Posterior vena cava (tissue), 2 donors: ENCODE measurements at regions of chr20 and their contacts with region 1.

Region 1: DNA sequence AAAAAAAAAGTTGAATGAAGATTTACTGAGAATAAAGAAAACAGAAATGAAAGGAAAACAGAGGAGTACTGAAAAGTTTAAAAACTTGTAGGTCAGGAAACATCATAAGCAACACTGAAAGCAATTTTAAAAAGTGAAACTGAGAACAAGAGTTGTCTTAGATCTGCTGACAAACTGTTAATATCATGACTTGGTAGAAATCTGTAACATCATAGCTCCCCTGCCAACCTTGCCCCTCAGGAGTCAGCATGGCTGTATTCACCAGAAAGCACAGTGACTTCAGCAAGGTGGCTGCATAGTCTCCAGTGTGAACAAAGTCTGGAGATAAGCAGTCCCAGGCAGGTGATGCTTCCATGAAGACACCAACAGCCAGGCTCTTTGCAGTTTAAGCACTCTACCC is 5.3 kb downstream of the NAA20 start:
- DNase-seq: no peak

Region 2: GRCh38 chr20:19223652-19224051 is 798.8 kb before region 1 on chr20:
- intact Hi-C with region 1: loop called in 1 of 2 experiments (anchors 5 kb)
- DNase-seq: no peak

Region 3: DNA sequence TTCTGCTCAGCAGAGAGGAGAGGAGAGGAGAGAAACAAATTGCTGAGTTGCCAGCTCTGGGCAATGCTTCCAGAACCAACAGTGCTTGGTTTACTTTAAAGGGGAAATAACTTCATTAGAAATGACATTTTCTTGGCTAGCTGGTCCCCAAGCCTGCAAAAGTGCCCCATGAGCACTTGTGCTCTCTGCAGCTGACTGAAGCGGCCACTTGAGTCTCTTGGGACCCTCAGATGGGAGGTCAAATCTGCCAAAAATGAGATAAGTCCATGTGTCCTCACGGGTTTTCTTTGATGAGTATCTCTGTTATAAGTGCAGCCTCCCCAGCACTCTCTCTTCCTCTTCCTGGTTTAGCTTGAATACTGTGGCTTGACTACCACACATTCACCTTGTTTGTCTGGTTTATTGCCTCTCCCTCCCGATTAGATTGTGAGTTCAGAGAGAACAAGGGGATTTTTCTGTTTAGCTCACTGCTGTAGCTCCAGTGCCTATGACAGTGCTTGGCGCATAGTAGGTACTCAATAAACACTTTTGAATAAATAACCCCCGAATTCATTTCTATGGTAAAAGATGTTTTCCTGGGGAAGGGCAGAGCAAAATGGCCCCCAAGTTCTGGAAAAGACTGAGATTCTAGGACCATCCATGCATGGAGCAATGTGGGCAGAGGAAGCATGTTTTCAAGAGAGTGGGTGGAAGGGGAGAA is 271.4 kb before region 1 on chr20:
- intact Hi-C with region 1: no loop called
- DNase-seq: no peak